OCI-LY7 (cell line): ENCODE measurements at regions of chr9 and their contacts with region 1.

Region 1: DNA sequence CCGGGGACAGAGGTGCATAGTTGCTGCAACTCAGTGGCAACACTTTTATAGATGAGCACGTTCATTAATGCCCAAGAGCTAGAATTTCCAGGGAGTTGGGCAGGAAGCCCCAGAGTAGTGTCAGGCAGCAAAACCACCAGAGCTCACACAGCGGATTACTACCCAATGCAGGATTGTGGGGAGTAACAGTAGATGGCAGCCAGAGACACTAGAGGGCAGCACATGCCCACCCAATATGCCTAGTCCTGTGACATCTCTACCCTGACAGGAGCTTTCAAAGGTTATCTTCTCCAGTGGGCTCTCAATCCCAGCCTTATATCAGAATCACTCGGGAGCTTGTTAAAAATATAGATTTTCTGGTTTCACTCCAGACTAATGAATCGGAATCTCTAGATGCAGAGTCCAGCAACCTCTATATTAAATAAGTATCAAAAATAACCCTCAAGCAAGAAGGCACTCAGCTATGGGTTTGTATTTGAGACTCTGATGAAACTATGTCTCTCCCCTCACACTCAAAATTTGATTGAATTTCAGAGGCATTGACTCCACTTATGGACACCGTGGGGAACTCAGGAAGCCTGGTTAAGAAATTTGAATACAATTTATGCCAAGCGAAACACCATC is 58.4 kb upstream of the PHF24 start:
- DNase-seq: peak; percentile 77
- H3K4me3 ChIP-seq: no peak overlapping the region
- H3K27ac ChIP-seq: no peak overlapping the region
- H3K4me1 ChIP-seq: no peaks in the 10 kb centered on the region
- CTCF ChIP-seq: peak; percentile 86

Region 2: GRCh38 chr9:34884732-34885131 is 14.9 kb before region 1 on chr9:
- CTCF ChIA-PET with region 1: no interaction called
- POLR2A ChIA-PET with region 1: no interaction called
- intact Hi-C with region 1: no loop called
- DNase-seq: no peak
- H3K4me3 ChIP-seq: no peak overlapping the region
- H3K27ac ChIP-seq: no peak overlapping the region
- H3K4me1 ChIP-seq: no peaks in the 10 kb centered on the region
- CTCF ChIP-seq: no peak

Region 3: DNA sequence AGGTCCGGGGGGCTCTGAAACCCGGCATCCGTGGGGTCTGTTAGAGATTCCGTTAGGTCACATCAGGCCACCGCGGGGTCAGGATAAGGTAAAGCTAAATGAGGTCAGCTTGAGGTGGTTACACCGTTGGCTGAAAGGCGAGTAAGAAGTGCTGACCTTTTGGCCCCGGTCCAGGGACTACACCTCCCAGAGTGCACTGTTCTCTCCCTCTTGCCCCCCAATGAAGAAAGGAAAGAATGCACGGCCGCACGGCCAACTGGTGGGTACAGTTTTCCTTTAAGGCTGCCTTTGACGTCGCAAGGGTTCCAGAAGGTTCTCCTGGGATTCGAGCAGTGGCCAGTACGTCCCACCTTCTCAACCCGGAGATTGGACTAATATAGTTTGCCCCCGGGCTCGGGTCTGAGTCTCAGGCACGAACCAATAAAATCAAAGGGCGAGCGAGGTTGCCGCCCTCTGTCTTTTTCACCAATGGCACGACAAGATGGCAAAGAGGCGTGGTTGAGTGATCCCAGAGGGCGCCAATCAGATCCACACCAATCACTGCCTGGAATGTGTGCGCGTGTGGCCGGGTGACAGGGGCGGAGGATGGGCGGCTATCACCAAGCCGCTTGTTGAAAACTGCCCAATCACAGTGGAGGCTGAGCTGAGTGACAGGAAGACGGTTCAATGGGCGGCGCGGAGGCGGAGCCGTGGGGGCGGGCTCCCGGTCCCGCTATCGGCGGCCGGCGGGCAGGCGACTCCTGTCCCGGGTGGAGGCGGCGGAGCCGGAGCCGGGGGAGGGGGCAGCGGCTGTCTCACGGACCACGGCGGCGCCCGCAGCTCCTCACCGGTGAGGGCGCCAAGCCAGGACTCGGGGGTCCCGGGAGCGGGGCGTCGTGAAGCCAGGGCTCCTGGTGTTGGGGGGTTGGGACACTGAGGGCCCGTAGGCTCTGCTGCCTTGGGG is 89.6 kb after region 1 on chr9 and contains the start of gene DNAJB5:
- CTCF ChIA-PET with region 1: interaction called, 22 read pairs
- POLR2A ChIA-PET with region 1: interaction called, 3 read pairs
- intact Hi-C with region 1: loop called (anchors 1 kb)
- DNase-seq: peak; percentile 98
- H3K4me3 ChIP-seq: peak within 1 kb of the TSS; percentile 79
- H3K27ac ChIP-seq: peak within 1 kb of the TSS; percentile 13
- H3K4me1 ChIP-seq: peaks cover 58% of the 10 kb centered on the region
- CTCF ChIP-seq: no peak
- total RNA-seq, gene DNAJB5: 4.6 and 5.1 TPM in 2 replicates

Region 4: DNA sequence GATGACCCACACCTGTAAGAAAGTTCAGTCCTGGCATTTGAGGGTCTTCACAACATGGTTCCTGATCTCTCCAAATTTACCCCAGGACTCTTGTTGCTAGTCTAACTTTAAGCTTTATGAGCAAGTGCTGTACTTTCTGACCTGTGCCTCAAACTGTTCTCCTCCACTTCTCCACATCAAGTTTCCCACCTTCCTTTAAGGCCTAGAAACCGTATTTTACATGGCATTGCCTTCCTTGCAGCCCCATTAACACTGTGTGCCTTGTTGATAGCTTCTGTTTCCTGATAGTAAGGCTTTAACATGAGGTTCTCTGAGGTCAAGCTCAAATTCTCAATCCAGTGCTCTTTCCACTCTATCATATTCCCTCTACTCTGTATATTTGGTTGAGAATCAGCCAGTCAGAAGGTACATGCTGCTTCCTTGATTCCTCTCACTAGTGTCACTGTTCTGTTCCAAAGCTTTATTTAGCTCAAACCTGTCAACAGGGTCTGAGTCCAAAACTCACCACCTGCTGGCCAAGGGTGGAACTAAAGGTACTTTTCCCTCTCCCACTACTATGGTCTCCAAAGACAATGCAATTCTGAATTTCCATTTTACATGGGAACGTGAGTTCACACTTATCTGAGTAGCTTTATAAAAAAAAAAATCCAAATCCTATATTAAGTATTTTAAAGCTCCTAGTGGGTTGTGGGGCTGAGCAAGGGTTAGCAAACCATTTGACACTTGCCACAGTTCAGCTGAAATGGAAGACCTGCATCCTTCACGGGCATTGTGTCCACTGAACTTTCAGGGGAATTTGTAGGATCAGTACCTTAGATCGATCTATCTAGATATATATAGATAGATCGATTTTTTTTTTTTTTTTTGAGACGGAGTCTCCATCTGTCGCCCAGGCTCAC is 151.7 kb after region 1 on chr9:
- CTCF ChIA-PET with region 1: interaction called, 5 read pairs
- POLR2A ChIA-PET with region 1: no interaction called
- intact Hi-C with region 1: loop called (anchors 2 kb)
- DNase-seq: peak; percentile 53
- H3K4me3 ChIP-seq: no peak overlapping the region
- H3K27ac ChIP-seq: no peak overlapping the region
- H3K4me1 ChIP-seq: no peaks in the 10 kb centered on the region
- CTCF ChIP-seq: peak; percentile 82

Region 5: GRCh38 chr9:35096035-35096849 is 196.6 kb after region 1 on chr9 and contains the start of gene PIGO:
- CTCF ChIA-PET with region 1: no interaction called
- POLR2A ChIA-PET with region 1: no interaction called
- intact Hi-C with region 1: loop called (anchors 2 kb)
- DNase-seq: peak; percentile 92
- H3K4me3 ChIP-seq: peak within 1 kb of the TSS; percentile 79
- H3K27ac ChIP-seq: peak within 1 kb of the TSS; percentile 80
- H3K4me1 ChIP-seq: peaks cover 16% of the 10 kb centered on the region
- CTCF ChIP-seq: peak; percentile 82
- total RNA-seq, gene PIGO: 12.7 and 16.0 TPM in 2 replicates

Region 6: GRCh38 chr9:35258676-35259474 is 359.2 kb after region 1 on chr9:
- CTCF ChIA-PET with region 1: no interaction called
- POLR2A ChIA-PET with region 1: no interaction called
- intact Hi-C with region 1: loop called (anchors 2 kb)
- DNase-seq: peak; percentile 63
- H3K4me3 ChIP-seq: no peak overlapping the region
- H3K27ac ChIP-seq: no peak overlapping the region
- H3K4me1 ChIP-seq: no peaks in the 10 kb centered on the region
- CTCF ChIP-seq: peak; percentile 87

Region 7: DNA sequence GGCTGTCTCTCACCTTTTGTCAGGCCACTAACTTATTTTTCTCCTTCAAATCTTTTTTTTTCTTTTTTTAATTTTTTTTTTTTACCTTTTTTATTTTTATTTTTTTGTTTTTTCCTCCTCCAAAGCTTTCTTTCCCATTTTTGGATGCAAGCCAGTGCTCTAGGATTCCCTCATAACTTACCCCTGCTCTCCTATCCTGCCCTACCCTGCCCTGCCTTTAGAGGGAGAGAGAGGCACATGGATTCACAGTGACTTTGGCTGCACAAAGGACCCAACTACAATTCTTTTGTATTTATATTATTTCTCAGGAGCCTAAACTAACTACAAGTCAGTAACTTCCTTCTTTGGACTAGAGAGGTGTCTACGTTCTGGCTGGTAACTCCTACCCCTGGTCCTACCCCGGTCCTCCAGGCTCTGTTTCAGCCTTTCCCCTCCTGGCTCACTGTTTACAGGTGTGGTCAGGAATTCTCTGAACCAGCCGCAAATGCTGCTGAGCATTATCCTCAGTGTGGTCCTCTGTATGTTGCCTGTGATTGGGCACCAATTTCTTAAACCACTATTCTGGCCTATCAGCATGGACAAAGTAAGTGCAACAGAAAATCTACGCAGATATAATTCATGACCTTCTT is 581.8 kb after region 1 on chr9:
- CTCF ChIA-PET with region 1: no interaction called
- POLR2A ChIA-PET with region 1: no interaction called
- intact Hi-C with region 1: loop called (anchors 5 kb)
- DNase-seq: peak; percentile 24
- H3K4me3 ChIP-seq: no peak overlapping the region
- H3K27ac ChIP-seq: no peak overlapping the region
- H3K4me1 ChIP-seq: no peaks in the 10 kb centered on the region
- CTCF ChIP-seq: peak; percentile 74